Psoas muscle (tissue), 8 donors: ENCODE measurements at regions of chr16 and their contacts with region 1.

Region 1: GRCh38 chr16:20741554-20742285 is at the start of gene THUMPD1:
- DNase-seq: peak; percentile 98
- ATAC-seq: peak; percentile 95 to 98 (median 97)
- H3K4me3 ChIP-seq: peak within 1 kb of the TSS; percentile 95
- H3K27ac ChIP-seq: peak within 1 kb of the TSS; percentile 98
- H3K4me1 ChIP-seq: peaks cover 15% of the 10 kb centered on the region
- H3K27me3 ChIP-seq: no peaks in the 10 kb centered on the region
- CTCF ChIP-seq: no peak
- total RNA-seq, gene THUMPD1: 15.2 to 29.5 (median 23.4) TPM

Region 2: GRCh38 chr16:20806168-20807050 is 64.7 kb after region 1 on chr16 and contains the starts of genes ERI2 and REXO5:
- intact Hi-C with region 1: loop called in 1 of 2 experiments (anchors 5 kb)
- DNase-seq: peak; percentile 89 to 94
- ATAC-seq: peak; percentile 93 to 96 (median 94)
- H3K4me3 ChIP-seq: peak within 1 kb of the TSS; percentile 94
- H3K27ac ChIP-seq: peak within 1 kb of the TSS; percentile 92
- H3K4me1 ChIP-seq: peaks cover 17% of the 10 kb centered on the region
- H3K27me3 ChIP-seq: no peaks in the 10 kb centered on the region
- CTCF ChIP-seq: peak; percentile 25
- total RNA-seq, gene ERI2: 4.2 to 9.5 (median 7.9) TPM
- total RNA-seq, gene REXO5: 0.63 to 1.4 (median 0.92) TPM